ENCODE measurements at regions of chr7 and their contacts with region 1.

Region 1: GRCh38 chr7:129635300-129636029 is 23.9 kb downstream of the NRF1 start:
- DNase-seq: no peak
- H3K4me3 ChIP-seq: no peak overlapping the region
- H3K27ac ChIP-seq: no peak overlapping the region
- H3K4me1 ChIP-seq: peaks cover 6 to 18% (median 13%) of the 10 kb centered on the region in 4 donors
- H3K27me3 ChIP-seq: no peaks in the 10 kb centered on the region
- CTCF ChIP-seq: peak; percentile 55 to 78 (median 58)
- EP300 ChIP-seq: no peak
- POLR2A ChIP-seq: no peak

Region 2: DNA sequence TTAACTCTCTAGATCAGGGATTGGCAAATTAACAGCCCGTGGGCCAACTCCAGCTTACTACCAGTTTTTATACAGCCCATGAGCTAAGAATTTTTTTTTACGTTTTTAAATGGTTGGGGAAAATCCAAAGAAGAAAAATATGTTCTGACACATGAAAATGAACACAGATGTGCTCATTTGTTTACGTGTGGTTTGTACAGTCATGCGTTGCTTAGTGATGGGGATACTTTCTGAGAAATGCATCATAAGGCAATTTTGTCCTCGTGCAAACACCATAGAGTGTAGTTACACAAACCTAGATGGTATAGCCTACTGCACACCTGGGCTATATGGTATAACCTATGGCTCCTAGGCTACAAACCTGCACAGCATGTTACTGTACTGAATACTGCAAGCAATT is 141.4 kb before region 1 on chr7:
- intact Hi-C with region 1: loop called (anchors 10 kb)
- DNase-seq: no peak
- H3K4me3 ChIP-seq: no peak overlapping the region
- H3K27ac ChIP-seq: no peak overlapping the region
- H3K4me1 ChIP-seq: no peaks in the 10 kb centered on the region
- H3K27me3 ChIP-seq: no peaks in the 10 kb centered on the region
- CTCF ChIP-seq: no peak
- EP300 ChIP-seq: no peak
- POLR2A ChIP-seq: no peak

Region 3: DNA sequence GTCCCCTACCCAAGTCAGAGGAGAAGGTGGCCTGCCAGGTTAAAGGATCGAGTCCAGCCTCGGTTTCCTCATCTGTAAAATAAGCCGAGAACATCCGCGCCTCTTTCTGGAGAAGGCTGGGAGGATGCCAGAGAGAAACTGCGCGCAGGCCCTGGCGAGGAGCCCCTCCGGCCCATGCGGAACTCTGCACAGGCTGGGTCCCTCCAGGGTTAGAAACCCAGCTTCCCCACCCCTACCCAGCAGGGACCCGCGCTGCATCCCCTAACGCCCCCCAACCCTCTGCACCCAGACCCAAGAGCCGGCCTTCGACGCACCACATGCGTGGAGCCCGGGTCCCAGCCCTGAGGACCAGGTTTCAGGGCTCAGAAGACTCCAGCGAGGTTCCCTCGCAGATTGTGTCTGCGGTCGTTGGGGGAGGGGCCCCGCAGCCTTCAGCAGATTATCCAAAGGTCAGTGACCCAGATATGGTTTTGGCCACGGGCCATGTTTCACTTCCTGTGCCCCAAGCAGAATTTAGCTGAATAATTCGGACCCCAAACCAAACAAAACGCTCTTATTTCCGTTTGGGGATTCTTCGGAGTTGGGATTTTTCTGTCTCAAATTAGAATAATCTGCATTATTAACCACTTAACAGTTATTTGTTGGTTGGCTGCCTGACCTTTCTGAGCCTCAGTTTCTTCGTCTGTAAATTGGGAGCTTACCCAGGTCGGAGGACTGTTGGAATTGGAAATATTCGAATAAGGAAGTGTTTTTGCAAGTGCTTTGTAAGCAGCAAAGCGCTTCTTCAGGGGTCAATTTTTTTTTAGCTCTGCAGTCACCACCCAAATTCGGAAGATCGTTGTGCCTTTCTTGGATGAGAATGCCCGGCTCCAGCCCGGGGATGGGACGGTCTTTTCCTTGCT is 149.6 kb after region 1 on chr7:
- intact Hi-C with region 1: no loop called
- DNase-seq: no peak
- H3K4me3 ChIP-seq: peak overlapping the region; percentile 1 to 31 (median 24)
- H3K27ac ChIP-seq: no peak overlapping the region
- H3K4me1 ChIP-seq: peaks cover 51 to 63% (median 61%) of the 10 kb centered on the region in 4 donors
- H3K27me3 ChIP-seq: peaks cover 38 to 100% (median 69%) of the 10 kb centered on the region in 4 donors
- CTCF ChIP-seq: no peak
- EP300 ChIP-seq: no peak
- POLR2A ChIP-seq: no peak

Region 4: GRCh38 chr7:129914536-129915272 is 279.2 kb after region 1 on chr7:
- intact Hi-C with region 1: no loop called
- DNase-seq: no peak
- H3K4me3 ChIP-seq: no peak overlapping the region
- H3K27ac ChIP-seq: peak overlapping the region in 2 of 4 donors; percentile 2 to 28
- H3K4me1 ChIP-seq: peaks cover 43 to 92% (median 64%) of the 10 kb centered on the region in 4 donors
- H3K27me3 ChIP-seq: no peaks in the 10 kb centered on the region
- CTCF ChIP-seq: no peak
- EP300 ChIP-seq: no peak
- POLR2A ChIP-seq: no peak

Measured in esophagus muscularis mucosa (tissue), 4 donors.